ENCODE measurements at regions of chr6 and their contacts with region 1.

Region 1: GRCh38 chr6:152948150-152948768 is 34.6 kb downstream of the FBXO5 start:
- DNase-seq: peak; percentile 64
- H3K4me3 ChIP-seq: no peak overlapping the region
- H3K27ac ChIP-seq: no peak overlapping the region
- H3K4me1 ChIP-seq: peaks cover 11% of the 10 kb centered on the region
- H3K27me3 ChIP-seq: no peaks in the 10 kb centered on the region
- CTCF ChIP-seq: peak; percentile 41 to 46
- POLR2A ChIP-seq: no peak

Region 2: DNA sequence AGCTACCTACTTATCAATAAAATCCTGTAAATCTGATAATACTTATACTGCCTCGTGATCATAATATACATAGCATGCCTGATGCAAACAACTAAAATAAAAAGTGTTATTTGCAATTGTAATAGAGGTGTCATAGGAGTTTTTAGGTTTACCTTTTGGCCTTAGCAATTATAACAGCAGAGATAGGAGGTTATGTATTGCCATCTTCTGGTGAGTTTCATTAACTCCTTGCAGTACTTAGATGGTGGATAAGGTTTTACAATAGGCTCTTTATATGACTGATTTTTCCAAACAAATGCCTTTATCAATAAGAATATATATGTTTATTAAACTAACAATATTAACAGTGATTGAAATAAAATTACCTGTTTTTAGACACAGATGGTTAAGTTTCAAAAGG is 278.4 kb before region 1 on chr6:
- CTCF ChIA-PET with region 1: interaction called, 11 read pairs
- POLR2A ChIA-PET with region 1: no interaction called
- dilution Hi-C with region 1: no loop called
- intact Hi-C with region 1: loop called (anchors 1 kb)
- DNase-seq: peak; percentile 67
- H3K4me3 ChIP-seq: no peak overlapping the region
- H3K27ac ChIP-seq: no peak overlapping the region
- H3K4me1 ChIP-seq: peaks cover 44% of the 10 kb centered on the region
- H3K27me3 ChIP-seq: no peaks in the 10 kb centered on the region
- CTCF ChIP-seq: peak; percentile 8 to 22
- POLR2A ChIP-seq: no peak

Region 3: DNA sequence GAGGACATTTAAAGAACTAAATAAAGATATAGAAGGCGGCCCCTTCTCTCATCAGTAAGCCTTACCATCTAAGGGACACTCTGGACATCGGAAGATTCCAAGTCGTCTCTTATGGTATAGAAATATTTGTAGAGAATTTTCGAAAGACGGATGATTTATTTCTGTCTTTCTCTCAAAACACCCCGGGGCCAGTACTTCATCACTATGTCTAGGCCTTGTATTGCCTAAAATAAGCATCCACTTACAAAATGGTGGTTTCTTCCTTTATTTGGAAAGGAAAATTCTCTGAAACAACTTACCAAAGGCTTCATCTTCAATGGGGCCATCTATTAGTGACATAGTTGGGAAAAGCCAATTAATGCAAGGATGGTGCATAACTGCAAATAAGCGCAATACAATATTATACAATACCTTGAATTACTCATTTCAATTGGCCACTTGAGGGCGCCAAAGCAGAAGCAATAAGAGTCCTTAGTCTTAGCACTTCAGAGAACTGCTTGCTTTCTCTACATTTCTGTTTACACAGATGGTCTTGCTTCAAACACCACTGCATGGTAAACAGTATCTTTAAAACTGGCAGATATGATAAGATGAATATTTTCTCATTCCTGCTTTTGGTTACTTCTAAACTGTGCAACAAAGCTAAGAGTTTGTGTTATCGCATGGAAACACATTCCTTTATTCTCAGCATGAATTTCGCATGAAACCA is 84.5 kb before region 1 on chr6:
- CTCF ChIA-PET with region 1: interaction called, 88 read pairs
- POLR2A ChIA-PET with region 1: no interaction called
- dilution Hi-C with region 1: no loop called
- intact Hi-C with region 1: loop called (anchors 1 kb)
- DNase-seq: peak; percentile 78
- H3K4me3 ChIP-seq: no peak overlapping the region
- H3K27ac ChIP-seq: no peak overlapping the region
- H3K4me1 ChIP-seq: no peaks in the 10 kb centered on the region
- H3K27me3 ChIP-seq: no peaks in the 10 kb centered on the region
- CTCF ChIP-seq: peak; percentile 48 to 54
- POLR2A ChIP-seq: no peak

Region 4: DNA sequence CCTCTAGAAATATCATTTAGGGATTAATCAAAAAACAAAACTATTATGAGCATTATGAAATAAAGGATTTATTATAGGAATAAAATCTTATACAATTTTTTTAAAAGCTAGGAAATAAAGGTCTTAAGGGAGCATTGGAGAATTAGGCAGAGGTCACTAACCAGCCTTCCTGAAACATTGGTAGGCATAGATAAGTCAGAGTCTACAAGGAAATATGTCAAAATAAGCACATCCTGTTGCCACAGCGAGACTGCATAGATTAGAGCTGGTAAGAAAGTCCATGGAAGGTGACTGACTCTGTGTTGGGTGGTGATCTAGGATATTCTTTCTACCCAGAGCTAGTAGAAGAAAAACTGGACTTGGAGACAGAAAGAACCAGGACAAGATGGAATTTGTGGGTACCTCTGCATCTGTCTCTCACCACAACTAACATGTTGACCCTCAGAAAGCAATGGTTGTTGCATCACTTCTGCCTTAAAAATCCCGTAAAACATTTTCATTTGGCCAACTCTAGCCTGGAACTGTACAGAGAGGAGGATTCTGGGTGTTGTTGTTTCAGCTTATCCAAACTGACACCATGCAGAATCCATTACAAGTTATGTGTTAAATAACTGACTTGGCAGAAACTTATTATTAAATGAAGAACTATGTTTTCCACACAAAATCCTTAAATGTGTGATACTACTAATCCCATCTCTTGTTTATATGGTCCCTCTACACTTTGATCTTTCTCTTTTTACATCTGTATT is 42.5 kb before region 1 on chr6:
- CTCF ChIA-PET with region 1: interaction called, 7 read pairs
- POLR2A ChIA-PET with region 1: no interaction called
- dilution Hi-C with region 1: no loop called
- intact Hi-C with region 1: loop called (anchors 2 kb)
- DNase-seq: peak; percentile 93
- H3K4me3 ChIP-seq: no peak overlapping the region
- H3K27ac ChIP-seq: no peak overlapping the region
- H3K4me1 ChIP-seq: peaks cover 11% of the 10 kb centered on the region
- H3K27me3 ChIP-seq: no peaks in the 10 kb centered on the region
- CTCF ChIP-seq: no peak
- POLR2A ChIP-seq: peak; percentile 20

Region 5: DNA sequence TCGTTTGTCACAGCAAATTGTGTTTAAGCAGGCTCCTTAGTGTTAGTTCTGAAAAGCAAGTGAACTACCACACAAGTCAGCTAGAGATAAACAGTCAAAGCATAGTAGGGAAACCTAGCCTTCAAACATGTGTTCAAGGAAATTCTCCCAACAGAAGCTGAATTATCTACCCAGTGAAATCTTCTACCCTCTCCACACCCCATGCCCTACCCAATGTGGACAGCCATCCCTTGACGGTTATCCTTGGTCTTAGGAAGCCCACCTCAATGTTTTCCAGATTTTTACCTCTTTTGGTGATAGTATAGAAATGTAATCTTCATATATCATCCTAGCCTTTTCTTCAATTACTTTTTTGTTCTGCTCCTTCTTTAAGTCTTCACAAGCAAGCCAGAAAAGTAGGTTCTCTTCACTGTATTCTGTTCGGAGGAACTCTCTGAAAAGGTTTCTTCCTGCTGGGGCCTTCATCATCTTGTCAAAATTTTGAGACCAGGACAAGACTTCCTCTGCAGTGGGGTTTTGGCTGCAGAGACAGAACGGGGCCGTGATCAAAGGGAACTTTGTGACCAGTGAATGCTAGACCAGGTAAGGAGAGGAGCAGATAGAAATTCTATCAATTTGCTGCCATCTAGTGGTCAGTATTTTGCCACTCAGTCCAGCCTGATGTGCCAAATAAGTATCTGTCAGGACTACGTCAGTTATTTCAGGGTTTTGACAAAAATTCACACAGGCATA is 75.9 kb after region 1 on chr6:
- CTCF ChIA-PET with region 1: interaction called, 3 read pairs
- POLR2A ChIA-PET with region 1: no interaction called
- dilution Hi-C with region 1: no loop called
- intact Hi-C with region 1: loop called (anchors 1 kb)
- DNase-seq: peak; percentile 77
- H3K4me3 ChIP-seq: no peak overlapping the region
- H3K27ac ChIP-seq: no peak overlapping the region
- H3K4me1 ChIP-seq: no peaks in the 10 kb centered on the region
- H3K27me3 ChIP-seq: no peaks in the 10 kb centered on the region
- CTCF ChIP-seq: peak; percentile 67 to 76
- POLR2A ChIP-seq: no peak

Region 6: GRCh38 chr6:153192943-153193885 is 245.0 kb after region 1 on chr6:
- CTCF ChIA-PET with region 1: no interaction called
- POLR2A ChIA-PET with region 1: no interaction called
- dilution Hi-C with region 1: no loop called
- intact Hi-C with region 1: no loop called
- DNase-seq: no peak
- H3K4me3 ChIP-seq: no peak overlapping the region
- H3K27ac ChIP-seq: no peak overlapping the region
- H3K4me1 ChIP-seq: no peaks in the 10 kb centered on the region
- H3K27me3 ChIP-seq: peaks cover 0 to 3% of the 10 kb centered on the region in 2 experiments
- CTCF ChIP-seq: no peak
- POLR2A ChIP-seq: no peak

Measured in endothelial cell of umbilical vein (primary cell).